Activated CD4-positive, alpha-beta T cell treated with anti-CD3 and anti-CD28 coated beads, Interleukin-2, amount 10 ng/mL, durations not matched to agents 24 days and 14 days (primary cell): ENCODE measurements at regions of chr17 and their contacts with region 1.

Region 1: GRCh38 chr17:38752119-38752929 is at the start of gene PSMB3:
- DNase-seq: peak; percentile 99
- H3K4me3 Mint-ChIP-seq: peak within 1 kb of the TSS; percentile 99
- H3K27ac Mint-ChIP-seq: peak within 1 kb of the TSS; percentile 98
- H3K4me1 Mint-ChIP-seq: peaks cover 39% of the 10 kb centered on the region
- H3K27me3 Mint-ChIP-seq: peaks cover 27% of the 10 kb centered on the region
- total RNA-seq, gene PSMB3: 356 and 358 TPM in 2 replicates

Region 2: GRCh38 chr17:38702166-38702899 is 50.0 kb before region 1 on chr17:
- intact Hi-C with region 1: loop called (anchors 1 kb)
- DNase-seq: peak; percentile 93
- H3K4me3 Mint-ChIP-seq: peak overlapping the region; percentile 90
- H3K27ac Mint-ChIP-seq: peak overlapping the region; percentile 100
- H3K4me1 Mint-ChIP-seq: peaks cover 47% of the 10 kb centered on the region
- H3K27me3 Mint-ChIP-seq: no peaks in the 10 kb centered on the region

Region 3: DNA sequence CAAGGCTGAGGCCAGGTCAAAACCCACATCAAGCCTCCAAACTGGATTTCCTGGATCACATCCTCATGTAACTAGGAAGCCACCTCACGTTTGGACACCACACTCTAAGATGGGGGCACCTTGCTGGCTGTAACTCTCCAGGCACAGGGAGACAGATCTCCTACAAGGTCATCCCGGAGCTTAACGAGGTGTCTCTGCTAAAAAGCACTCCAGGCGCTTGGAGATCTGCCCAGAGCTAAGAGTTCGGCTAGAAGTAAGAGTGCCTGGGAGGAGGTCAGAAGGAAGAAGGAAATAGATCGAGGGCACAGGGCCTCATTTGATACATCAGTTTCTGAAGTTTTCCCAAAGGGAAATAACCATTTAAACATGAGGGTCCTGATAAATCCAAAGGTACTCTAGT is 16.1 kb after region 1 on chr17:
- intact Hi-C with region 1: no loop called
- DNase-seq: no peak
- H3K4me3 Mint-ChIP-seq: no peak overlapping the region
- H3K27ac Mint-ChIP-seq: no peak overlapping the region
- H3K4me1 Mint-ChIP-seq: peaks cover 2% of the 10 kb centered on the region
- H3K27me3 Mint-ChIP-seq: no peaks in the 10 kb centered on the region

Region 4: DNA sequence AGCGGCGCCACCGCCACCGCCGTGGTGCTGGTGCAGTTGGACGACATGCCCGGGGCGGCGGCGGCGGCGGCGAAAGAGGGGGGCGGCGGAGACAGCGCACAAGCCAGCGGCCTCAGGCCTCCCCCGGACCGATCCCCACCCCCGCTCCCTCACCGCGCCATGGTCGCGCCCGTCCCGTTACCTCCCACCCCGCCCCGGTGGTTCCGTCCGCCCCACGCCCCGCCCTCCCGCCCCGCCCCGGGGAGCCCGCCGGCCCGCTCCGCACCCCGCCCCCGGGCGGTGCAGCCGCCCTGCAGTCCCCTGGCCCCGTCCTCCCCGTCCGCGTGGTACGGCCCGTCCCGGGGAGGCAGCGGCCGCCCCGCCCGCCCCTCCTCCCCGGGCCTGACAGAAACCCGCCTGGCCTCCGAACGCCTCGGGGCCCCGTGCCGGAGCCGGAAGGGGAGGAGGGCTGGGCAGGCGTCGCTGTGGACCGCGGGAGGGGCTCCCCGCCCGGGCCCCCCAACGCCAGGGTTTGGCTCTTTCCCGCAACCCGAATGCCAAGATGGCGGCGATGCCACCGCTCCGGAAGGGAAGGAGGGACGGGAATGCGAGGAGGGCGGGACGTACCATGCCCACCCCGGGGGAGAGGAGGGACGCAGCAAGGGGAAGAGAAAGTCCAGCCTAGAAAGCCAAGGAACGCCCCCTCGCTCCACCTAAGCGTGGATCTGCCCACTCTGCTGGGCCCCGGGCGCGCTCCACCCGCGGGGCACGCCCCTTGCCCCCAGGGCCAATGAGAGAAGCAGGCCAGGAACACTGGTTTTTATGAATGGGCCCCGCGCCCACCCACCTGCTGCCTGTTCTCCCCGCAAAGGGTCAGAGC is 47.3 kb after region 1 on chr17 and contains the start of gene PIP4K2B:
- intact Hi-C with region 1: loop called (anchors 2 kb)
- DNase-seq: peak; percentile 97
- H3K4me3 Mint-ChIP-seq: peak within 1 kb of the TSS; percentile 95
- H3K27ac Mint-ChIP-seq: peak within 1 kb of the TSS; percentile 96
- H3K4me1 Mint-ChIP-seq: peaks cover 36% of the 10 kb centered on the region
- H3K27me3 Mint-ChIP-seq: no peaks in the 10 kb centered on the region
- total RNA-seq, gene PIP4K2B: 42.8 and 44.3 TPM in 2 replicates

Region 5: GRCh38 chr17:38841141-38841485 is 88.8 kb after region 1 on chr17:
- intact Hi-C with region 1: no loop called
- DNase-seq: peak; percentile 65
- H3K4me3 Mint-ChIP-seq: peak overlapping the region; percentile 35
- H3K27ac Mint-ChIP-seq: no peak overlapping the region
- H3K4me1 Mint-ChIP-seq: no peaks in the 10 kb centered on the region
- H3K27me3 Mint-ChIP-seq: no peaks in the 10 kb centered on the region

Region 6: DNA sequence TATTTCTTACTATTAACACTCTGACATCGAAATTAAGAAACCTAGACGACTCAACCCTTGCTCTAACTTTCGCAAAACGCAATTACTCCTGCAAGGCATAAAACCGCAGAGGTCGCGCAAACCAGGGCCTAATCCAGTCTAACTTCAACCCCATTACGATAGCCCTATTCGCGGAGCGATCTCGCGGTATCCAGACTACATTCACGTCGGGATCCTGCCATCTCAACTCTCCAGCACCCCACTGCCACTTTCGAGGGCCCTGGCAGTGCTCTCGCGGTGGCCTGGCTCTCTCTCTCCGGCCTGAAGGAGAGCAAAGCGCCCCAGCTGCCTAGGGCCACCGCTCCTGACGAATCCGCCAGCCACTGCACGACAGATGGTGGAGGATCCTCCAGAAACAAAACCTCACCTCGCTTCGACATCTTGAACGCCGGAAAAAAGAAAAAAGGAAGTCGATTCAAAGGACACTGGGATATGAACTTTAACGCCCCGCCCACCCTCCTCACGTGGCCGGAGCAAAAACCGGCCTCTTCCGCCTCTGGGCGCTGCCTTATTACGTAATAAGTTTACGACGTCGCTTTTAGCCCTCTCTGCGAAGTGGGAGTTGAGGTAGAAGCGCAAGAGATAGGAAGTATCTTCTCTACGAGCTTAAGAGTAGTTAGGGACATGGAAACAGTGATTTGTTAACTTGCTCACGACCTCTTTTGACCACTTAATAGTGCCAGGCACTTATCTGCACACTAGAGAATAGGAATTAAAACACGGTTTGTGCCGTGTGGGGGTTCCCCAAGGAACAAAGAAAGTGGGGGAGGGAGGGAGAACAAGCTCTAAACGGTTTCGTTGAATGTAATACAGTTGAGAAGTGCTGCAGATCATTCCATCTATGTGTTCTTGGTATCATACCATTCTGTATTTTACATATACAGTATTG is 101.2 kb after region 1 on chr17 and contains the start of gene RPL23:
- intact Hi-C with region 1: loop called (anchors 5 kb)
- DNase-seq: peak; percentile 97
- H3K4me3 Mint-ChIP-seq: peak within 1 kb of the TSS; percentile 91
- H3K27ac Mint-ChIP-seq: peak within 1 kb of the TSS; percentile 98
- H3K4me1 Mint-ChIP-seq: peaks cover 30% of the 10 kb centered on the region
- H3K27me3 Mint-ChIP-seq: no peaks in the 10 kb centered on the region
- total RNA-seq, gene RPL23: 1,994 and 2,005 TPM in 2 replicates

Region 7: DNA sequence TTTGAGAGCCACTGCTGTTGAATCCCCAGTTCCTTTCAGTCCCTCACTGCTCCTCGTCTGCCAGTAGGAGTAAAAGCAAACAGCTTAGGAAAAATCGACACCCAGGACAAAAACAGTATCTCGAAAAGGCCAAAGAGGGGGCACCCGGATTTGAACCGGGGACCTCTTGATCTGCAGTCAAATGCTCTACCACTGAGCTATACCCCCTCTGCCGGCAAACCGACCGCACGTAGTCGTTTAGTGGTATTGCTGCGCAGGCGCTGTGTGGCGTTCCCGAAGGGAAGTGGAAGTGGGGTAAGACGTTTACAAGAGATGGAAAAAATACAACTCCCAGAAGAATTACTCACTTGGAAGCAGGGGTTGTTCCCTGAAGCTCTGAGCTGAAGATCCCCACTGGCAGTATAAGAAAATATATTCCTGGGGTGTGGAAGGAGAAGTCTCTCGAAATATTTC is 401.3 kb after region 1 on chr17:
- intact Hi-C with region 1: loop called (anchors 1 kb)
- DNase-seq: peak; percentile 98
- H3K4me3 Mint-ChIP-seq: peak overlapping the region; percentile 95
- H3K27ac Mint-ChIP-seq: peak overlapping the region; percentile 94
- H3K4me1 Mint-ChIP-seq: peaks cover 27% of the 10 kb centered on the region
- H3K27me3 Mint-ChIP-seq: peaks cover 41% of the 10 kb centered on the region